HEK293T (cell line): ENCODE measurements at regions of chr10 and their contacts with region 1.

Region 1: DNA sequence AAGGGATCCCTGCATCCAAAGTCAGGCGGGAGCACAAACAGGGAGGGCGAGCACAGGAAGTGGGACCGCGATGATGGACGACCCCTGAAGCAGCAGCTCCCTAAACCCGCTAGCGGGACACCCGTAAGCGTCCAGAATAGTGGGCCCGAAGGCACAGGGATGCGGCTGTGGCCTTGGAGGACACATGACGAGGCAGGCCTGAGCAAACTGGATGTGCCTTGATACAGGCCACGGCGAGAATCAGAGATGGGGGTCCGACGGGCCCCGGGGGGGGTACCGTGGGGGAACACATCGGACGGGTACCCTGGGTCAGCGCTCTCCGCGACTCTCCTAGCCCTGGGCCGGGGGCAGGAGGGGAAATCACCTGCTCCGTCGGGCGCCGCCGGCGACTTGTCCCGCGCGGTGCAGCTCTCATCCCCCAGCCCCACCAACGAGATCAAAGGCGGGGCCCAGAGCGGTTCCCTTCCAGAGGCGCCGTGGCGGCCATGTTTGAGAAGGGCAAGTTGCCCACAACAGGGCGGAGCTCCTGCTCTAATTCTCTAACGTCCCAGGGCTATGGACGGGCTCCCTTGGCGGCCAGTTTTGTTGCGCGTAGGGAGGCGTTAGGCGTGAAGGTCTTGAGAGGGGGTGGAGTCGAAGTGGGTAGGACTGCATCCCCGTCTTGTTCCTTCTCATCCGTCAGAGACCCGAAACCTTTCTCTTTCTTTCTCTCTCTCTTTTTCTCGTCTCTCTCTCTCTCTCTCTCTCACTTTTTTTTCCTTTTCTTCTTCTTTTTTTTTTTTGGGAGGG is at the start of gene CUEDC2:
- DNase-seq: peak; percentile 95

Region 2: DNA sequence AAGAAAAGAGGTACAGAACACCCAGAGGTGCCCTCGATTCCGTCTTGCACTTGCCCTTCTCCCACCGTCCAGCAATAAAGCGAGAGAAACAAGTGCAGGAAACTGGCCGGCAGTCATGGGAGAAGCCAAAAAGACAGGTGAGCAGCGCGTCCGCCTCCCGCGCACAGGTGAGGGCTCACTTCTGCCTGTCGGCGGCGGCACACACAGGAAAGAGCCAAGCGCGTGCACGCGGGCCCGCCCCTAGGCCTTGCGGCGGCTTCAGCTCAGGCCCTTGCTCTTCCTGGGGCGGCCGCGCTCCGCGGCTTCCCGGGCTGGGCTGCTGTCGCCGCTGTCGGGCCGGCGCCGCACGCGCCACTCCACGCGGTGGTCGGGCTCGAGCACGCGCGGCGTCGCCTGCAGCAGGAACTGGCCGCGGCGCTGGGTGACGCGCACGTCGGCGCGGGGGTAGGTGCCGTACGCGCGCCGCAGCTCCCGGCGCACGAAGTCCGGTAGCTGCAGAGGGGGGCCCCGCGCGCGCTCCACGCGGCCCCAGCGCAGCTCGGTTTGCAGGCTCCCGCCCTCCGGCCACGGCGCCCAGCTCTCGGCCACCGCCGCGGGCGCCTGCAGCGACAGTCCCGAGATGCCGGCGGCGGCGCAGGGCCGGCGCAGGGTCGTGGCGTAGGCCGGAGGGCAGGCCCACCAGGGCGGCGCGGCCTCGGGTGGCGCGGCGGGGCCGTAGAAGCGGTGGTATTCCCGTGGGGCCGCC is 18.0 kb after region 1 on chr10:
- CTCF ChIA-PET with region 1: interaction called, 5 read pairs
- POLR2A ChIA-PET with region 1: interaction called, 62 read pairs
- DNase-seq: peak; percentile 86

Region 3: DNA sequence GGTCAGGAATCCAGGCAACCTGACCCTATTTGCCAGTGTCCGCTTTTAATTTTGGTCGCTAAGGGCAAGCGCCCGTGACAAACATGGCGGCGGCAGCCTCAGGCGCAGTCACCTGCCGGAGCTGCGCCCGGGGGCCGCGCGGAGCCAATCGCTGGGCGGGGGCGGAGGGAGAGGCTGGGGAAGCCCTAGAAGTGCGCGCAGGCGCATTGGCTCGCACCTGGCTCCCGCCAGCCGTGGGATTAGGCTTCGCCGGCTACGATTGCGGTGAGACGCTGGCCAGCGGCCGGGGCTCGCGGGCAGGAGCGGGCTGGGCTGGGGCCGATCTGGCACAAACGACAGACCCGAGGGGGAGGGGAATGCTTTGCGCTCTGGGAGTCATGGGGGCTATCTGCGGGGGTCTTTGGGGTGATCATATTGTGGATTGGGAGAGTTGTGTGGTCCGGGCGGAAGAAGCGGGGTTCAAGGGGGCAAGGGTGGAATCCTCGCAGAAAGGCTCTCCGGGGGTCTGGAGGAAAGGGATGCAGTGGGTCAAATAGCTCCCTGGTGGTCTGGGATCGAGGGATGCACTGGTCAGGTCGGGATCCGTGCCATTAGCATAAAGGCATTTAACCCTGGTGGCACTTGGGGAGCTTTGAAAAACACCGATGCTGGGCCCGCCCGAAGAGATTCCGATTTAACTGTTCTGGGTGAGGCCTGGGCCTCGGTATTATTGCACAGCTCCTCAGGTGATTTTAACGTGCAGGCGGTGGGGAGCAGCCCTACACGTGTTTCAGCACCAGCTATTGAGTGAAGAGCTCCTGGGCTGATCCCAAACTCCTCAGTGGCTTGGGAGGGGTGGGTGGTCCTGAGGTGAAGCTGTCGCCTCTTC is 29.1 kb after region 1 on chr10:
- CTCF ChIA-PET with region 1: no interaction called
- POLR2A ChIA-PET with region 1: interaction called, 23 read pairs
- DNase-seq: peak; percentile 100

Region 4: GRCh38 chr10:102467971-102468438 is 35.6 kb after region 1 on chr10:
- CTCF ChIA-PET with region 1: no interaction called
- POLR2A ChIA-PET with region 1: interaction called, 23 read pairs
- DNase-seq: no peak

Region 5: GRCh38 chr10:102492983-102493382 is 60.6 kb after region 1 on chr10:
- CTCF ChIA-PET with region 1: no interaction called
- POLR2A ChIA-PET with region 1: no interaction called
- DNase-seq: no peak